HCT116 (cell line): ENCODE measurements at regions of chrX and their contacts with region 1.

Region 1: DNA sequence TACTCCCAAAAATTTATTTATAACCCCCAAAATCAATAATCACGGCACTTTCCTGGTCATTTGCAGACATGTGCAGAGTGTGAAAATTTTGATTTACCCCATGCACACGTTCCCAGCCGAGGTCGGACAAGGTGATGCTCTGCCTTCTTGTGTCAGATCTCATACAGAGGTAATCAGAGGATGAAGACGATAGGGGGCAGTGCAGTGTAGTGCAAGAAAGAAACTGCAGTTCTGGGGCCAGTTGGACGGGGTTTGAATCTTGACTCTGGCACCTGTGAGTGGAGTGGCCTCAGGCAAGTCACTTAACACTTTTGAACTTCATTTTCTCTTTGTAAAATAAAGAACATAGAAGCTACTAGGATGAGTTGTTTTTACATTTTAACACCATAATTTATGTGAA is 88.4 kb downstream of the FRMPD3 start:
- DNase-seq: peak; percentile 31
- ATAC-seq: peak; percentile 75
- H3K4me3 ChIP-seq: no peak overlapping the region
- H3K27ac ChIP-seq: no peak overlapping the region
- H3K4me1 ChIP-seq: no peaks in the 10 kb centered on the region
- H3K27me3 ChIP-seq: no peaks in the 10 kb centered on the region
- CTCF ChIP-seq: peak; percentile 35 to 54 (median 47); a peak in 4 of 6 replicates
- POLR2A ChIP-seq: no peak
- RAD21 ChIP-seq: peak; percentile 67

Region 2: GRCh38 chrX:107374132-107374531 is 163.7 kb before region 1 on chrX:
- CTCF ChIA-PET with region 1: no interaction called
- POLR2A ChIA-PET with region 1: no interaction called
- RAD21 ChIA-PET with region 1: no interaction called
- intact Hi-C with region 1: no loop called
- DNase-seq: no peak
- ATAC-seq: no peak
- H3K4me3 ChIP-seq: no peak overlapping the region
- H3K27ac ChIP-seq: no peak overlapping the region
- H3K4me1 ChIP-seq: no peaks in the 10 kb centered on the region
- H3K27me3 ChIP-seq: no peaks in the 10 kb centered on the region
- CTCF ChIP-seq: no peak
- POLR2A ChIP-seq: no peak
- RAD21 ChIP-seq: no peak

Region 3: DNA sequence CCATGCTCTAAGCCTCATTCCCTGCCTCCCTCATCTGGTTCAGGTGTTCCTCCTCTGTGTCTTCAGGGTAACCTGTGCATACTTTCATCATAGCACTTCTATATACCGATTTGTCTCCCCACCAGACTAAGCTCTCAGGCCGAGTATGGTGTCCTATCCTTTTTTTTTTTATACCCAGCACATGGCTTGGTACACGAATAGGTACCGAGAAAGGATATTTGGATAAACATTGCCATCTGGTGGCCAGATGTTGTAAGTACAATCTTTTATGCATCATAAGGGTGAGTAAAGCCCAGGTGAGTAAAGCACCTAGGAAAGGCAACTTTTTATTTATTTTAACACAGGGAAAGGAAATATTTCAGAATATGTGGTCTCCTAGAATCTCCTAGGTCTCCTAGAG is 356.2 kb after region 1 on chrX:
- CTCF ChIA-PET with region 1: no interaction called
- POLR2A ChIA-PET with region 1: no interaction called
- RAD21 ChIA-PET with region 1: no interaction called
- intact Hi-C with region 1: loop called (anchors 5 kb)
- DNase-seq: peak; percentile 51
- ATAC-seq: peak; percentile 83
- H3K4me3 ChIP-seq: no peak overlapping the region
- H3K27ac ChIP-seq: no peak overlapping the region
- H3K4me1 ChIP-seq: no peaks in the 10 kb centered on the region
- H3K27me3 ChIP-seq: no peaks in the 10 kb centered on the region
- CTCF ChIP-seq: peak; percentile 25 to 54 (median 50); a peak in 5 of 6 replicates
- POLR2A ChIP-seq: no peak
- RAD21 ChIP-seq: peak; percentile 74